Cardiac septum (tissue), 1 donor: ENCODE measurements at regions of chr1 and their contacts with region 1.

Region 1: GRCh38 chr1:11059990-11060830 is at the start of gene SRM:
- DNase-seq: peak; percentile 95
- total RNA-seq, gene SRM: 58.0 TPM

Region 2: DNA sequence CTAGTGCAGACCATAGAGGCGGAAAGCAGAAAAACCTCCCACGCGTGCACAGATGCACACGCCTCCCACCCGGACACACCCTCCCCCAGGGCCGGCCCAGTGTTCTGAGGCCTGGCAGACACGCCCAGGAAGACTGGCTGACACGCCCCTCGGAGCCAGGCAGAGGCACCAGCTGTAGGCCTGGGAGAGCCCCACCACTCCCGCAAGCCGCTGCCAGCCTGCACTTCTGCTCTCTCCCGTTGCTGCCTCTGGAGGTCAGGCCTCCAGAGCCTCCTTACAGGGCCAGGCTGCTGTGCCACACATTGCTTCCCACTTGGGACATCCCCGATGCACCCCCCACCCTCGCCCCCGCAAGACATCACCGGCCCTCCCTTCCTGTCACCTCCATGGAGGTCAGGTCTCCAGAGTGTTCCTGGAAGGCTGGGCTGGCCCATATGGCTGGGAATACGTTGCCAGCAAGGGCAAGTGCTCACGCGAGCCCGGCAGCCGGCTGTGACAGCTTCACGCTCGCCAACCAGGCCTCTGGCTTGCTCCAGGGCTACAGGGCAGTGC is 304.2 kb before region 1 on chr1:
- intact Hi-C with region 1: no loop called
- DNase-seq: peak; percentile 86

Region 3: GRCh38 chr1:10776190-10776855 is 283.9 kb before region 1 on chr1:
- intact Hi-C with region 1: no loop called
- DNase-seq: no peak

Region 4: DNA sequence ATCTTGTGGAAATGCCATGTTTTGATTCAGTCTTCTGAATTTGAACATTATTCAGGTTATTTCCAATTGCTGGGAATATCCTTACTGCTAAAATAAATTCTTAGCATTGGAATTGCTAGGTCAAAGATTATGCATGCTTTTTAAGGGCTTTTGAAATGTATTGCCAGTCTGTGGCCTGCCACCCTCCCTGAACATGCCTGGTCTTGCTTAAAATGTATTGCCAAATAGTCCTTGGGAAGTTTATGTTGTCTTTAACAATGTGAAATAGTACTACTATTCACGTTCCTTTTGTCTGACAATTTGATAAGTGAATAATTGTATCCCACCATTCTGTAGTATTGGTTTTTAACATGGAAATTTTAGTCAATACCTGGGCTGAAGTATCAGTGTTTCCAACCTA is 34.2 kb before region 1 on chr1:
- intact Hi-C with region 1: no loop called
- DNase-seq: no peak

Region 5: DNA sequence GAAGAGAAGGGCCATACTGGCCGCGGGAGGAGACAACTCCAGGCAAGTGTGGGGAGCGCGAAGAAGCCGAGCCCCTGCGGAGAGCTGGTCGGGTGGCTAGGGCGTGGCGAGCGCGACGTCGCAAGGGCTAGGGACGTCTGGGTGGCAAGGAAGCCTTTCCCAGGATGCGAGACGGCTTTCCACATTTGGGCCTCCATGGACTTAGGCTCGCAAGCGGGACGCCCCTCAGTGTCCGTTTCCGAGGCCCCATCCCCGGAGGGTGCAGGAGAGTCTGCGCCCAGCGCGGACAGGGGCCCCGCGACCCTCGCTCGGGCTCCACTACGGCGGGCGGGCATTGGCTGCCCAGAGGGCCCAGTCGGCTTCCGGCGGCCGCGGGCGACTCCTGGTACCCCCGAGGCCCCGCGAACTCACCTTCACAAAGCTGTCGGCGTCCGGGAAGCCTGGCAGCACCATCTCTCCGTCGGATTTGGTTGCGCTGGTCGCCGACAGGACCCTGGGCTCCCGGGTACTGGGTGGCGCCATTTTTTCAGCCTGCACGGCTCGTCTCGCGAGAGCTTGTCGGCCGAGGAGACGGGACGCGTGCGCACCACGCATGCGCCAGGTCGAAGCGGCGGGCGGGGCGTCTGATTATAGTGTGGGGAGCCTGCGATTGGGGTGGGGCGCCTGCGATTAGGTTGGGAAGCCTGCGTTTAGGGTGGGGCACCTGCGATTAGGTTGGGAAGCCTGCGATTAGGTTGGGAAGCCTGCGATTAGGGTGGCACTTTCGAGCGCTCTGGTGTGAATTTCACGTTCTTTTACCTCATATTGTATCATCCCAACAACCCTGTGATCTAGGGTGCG is 39.3 kb after region 1 on chr1 and contains the start of gene EXOSC10:
- intact Hi-C with region 1: loop called (anchors 1 kb)
- DNase-seq: peak; percentile 97
- total RNA-seq, gene EXOSC10: 22.5 TPM

Region 6: DNA sequence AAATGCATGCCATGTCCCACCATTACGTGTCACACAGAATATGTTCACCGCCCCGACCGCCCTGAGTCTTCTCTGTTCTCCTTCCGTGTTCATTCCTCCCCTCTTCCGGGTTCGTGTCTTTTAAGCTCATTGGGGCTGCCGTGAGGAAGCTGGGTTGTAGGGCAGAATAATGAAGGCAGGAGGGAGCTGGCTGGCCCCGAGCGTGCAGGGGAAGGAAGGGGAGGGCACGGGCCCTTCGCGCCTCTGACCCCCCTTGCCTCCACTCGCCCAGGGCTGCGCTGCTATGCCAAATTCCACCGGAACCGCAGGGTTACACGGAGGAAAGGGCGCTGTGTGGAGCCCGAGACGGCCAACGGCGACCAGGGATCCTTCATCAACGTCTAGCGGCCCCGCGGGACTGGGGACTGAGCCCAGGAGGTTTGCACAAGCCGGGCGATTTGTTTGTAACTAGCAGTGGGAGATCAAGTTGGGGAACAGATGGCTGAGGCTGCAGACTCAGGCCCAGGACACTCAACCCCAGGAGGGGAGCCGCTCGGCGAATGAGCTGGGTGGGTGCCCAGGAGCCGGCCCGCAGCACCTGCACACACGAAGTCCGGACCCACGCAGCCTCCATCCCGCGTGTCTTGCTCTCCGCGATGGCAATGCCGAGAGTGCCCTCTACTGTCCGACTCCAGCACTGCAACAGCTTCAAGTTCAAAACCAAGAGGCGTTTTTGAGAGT is 659.3 kb after region 1 on chr1:
- intact Hi-C with region 1: loop called (anchors 10 kb)
- DNase-seq: peak; percentile 93